ENCODE measurements at regions of chr11 and their contacts with region 1.

Region 1: DNA sequence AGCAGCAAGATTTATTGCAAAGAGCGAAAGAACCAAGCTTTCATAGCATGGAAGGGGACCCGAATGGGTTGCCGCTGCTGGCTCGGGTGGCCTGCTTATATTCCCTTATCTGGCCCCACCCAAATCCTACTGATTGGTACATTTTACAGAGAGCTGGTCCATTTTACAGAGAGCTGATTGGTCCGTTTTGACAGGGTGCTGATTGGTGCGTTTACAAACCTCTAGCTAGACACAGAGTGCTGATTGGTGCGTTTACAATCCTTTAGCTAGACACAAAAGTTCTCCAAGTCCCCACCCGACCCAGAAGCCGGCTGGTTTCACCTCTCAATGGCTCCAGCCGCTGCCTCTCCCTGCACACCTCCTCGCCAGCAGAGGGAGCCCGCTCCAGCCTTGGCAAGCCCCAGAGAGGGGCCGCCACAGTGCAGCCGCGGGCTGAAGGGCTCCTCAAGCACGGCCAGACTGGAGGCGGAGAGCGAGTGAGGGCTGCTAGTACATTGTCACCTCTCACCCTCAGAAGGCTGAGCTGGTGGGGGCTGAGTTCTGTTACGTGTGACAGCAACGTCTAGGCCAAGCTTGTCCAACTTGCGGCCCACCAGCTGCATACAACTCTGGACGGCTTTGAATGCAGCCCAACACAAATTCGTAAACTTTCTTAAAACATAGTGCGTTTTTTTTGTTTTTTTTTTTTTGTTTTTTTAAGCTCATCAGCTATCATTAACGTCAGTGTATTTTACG is 8.7 kb downstream of the PTH start:
- DNase-seq: peak; percentile 80
- ATAC-seq: peak; percentile 93
- H3K4me3 Mint-ChIP-seq: peak overlapping the region; percentile 50
- H3K27ac Mint-ChIP-seq: peak overlapping the region; percentile 71
- H3K4me1 Mint-ChIP-seq: peaks cover 4% of the 10 kb centered on the region
- H3K27me3 Mint-ChIP-seq: peaks cover 1% of the 10 kb centered on the region

Region 2: DNA sequence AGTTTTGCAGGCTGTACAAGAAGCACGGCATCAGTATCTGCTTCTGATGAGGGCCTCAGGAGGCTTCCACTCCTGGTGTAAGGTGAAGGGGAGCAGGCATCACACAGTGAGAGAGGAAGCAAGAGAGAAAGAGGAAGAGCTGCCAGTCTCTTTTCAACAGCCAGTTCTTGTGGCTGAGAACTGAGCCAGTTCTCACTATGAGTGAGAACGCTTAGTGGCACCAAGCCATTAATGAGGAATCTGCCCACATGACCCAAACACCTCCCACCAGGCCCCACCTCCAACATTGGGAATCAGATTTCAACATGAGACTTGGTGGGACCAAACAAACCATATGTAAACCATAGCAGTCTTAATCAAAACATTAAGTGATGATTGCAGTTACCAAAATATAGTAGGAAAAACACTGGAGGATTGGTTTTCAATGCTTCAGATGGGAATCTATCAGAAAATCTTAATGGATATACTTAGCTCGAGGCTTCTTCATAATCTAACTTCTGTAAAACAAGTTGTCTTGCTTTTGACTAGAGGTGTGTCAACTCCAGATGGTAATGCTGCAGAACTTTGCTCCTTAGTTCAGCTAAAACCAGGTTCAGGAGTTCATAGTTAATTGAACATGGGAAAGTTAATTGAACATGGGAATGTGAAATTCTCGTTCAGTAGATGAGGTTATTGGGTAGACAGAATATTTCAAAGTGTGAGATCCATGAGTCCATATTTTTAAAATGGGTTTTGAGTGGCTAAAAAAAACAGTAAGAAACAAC is 193.6 kb after region 1 on chr11:
- CTCF ChIA-PET with region 1: no interaction called
- POLR2A ChIA-PET with region 1: no interaction called
- intact Hi-C with region 1: no loop called
- DNase-seq: no peak
- ATAC-seq: no peak
- H3K4me3 Mint-ChIP-seq: no peak overlapping the region
- H3K27ac Mint-ChIP-seq: no peak overlapping the region
- H3K4me1 Mint-ChIP-seq: peaks cover 45% of the 10 kb centered on the region
- H3K27me3 Mint-ChIP-seq: no peaks in the 10 kb centered on the region

Region 3: GRCh38 chr11:14015476-14016110 is 528.5 kb after region 1 on chr11:
- CTCF ChIA-PET with region 1: no interaction called
- POLR2A ChIA-PET with region 1: no interaction called
- intact Hi-C with region 1: no loop called
- DNase-seq: no peak
- ATAC-seq: no peak
- H3K4me3 Mint-ChIP-seq: no peak overlapping the region
- H3K27ac Mint-ChIP-seq: no peak overlapping the region
- H3K4me1 Mint-ChIP-seq: no peaks in the 10 kb centered on the region
- H3K27me3 Mint-ChIP-seq: no peaks in the 10 kb centered on the region

Region 4: GRCh38 chr11:15233371-15234165 is 1746.5 kb after region 1 on chr11:
- CTCF ChIA-PET with region 1: no interaction called
- POLR2A ChIA-PET with region 1: no interaction called
- intact Hi-C with region 1: loop called in 1 of 2 experiments (anchors 10 kb)
- DNase-seq: no peak
- ATAC-seq: no peak
- H3K4me3 Mint-ChIP-seq: no peak overlapping the region
- H3K27ac Mint-ChIP-seq: no peak overlapping the region
- H3K4me1 Mint-ChIP-seq: no peaks in the 10 kb centered on the region
- H3K27me3 Mint-ChIP-seq: peaks cover 2% of the 10 kb centered on the region

Measured in activated CD4-positive, alpha-beta T cell treated with anti-CD3 and anti-CD28 coated beads for 36 hours (primary cell).